Common myeloid progenitor, CD34-positive (primary cell): ENCODE measurements at regions of chr1 and their contacts with region 1.

Region 1: DNA sequence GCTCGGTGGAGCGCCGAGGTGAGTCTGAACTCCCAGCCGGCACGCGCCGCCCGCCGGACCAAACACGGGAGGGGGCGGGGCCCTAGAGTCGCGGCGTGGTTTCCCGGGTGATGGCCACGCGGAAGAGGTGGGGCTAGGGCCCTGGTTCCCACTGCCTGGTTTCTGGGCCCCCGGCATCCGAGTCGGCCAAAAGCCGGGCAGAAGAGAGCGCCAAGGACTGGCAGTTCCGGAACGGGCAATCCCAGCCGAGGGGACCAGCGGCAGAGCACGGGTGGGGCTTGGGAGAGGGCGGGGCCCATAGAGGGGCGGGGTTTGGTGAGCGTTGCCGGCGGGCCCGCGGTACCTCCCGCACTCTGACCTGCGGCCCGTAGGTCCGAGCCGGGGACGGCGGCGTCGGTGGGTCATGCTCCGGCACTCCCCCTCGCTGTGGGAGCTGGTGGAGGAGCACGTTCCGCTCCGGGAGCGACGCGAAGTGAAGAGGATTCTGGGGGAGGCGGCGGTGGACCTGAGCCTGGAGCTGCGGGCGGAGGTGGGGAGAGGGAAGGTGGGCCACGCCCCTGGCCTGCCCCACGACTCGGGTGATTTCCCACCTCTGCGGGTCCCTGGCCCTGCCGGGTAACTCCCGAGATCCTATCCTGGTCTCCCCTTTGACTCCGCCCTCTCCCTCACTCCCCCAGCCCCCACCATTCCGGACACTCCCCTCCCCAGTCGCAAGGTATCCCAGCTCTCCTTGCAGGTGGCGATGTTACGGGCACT is at the start of gene CCDC24:
- DNase-seq: peak; percentile 28 to 66 (median 51)
- H3K4me3 ChIP-seq: peak within 1 kb of the TSS; percentile 49 to 87 (median 72)
- H3K27ac ChIP-seq: peak within 1 kb of the TSS in 1 of 2 experiments; percentile 49
- H3K4me1 ChIP-seq: peaks cover 0 to 28% (median 28%) of the 10 kb centered on the region in 4 experiments
- H3K27me3 ChIP-seq: no peaks in the 10 kb centered on the region

Region 2: DNA sequence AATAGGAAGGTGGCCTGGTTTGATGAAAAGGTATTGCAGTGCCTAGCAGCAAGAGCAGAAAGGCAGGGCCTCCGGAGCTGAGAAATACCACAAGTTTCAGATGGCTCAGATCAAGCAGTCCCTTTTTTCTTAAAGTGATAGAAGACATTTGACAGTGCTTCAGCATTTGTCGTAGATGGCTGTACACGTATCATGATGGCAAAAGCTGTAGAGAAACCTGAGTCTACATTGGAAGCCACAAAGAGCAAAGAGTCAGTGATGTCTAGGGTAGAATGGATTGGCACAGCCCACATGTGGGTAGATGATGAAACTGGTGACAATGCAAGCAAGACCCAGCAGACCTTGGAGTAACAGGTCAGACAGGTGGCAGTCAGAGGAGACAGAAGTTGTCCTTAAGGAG is 159.4 kb before region 1 on chr1:
- CTCF ChIA-PET with region 1: no interaction called
- POLR2A ChIA-PET with region 1: no interaction called
- DNase-seq: no peak
- H3K4me3 ChIP-seq: no peak overlapping the region
- H3K27ac ChIP-seq: no peak overlapping the region
- H3K4me1 ChIP-seq: peaks cover 17 to 56% (median 43%) of the 10 kb centered on the region in 4 experiments
- H3K27me3 ChIP-seq: no peaks in the 10 kb centered on the region

Region 3: DNA sequence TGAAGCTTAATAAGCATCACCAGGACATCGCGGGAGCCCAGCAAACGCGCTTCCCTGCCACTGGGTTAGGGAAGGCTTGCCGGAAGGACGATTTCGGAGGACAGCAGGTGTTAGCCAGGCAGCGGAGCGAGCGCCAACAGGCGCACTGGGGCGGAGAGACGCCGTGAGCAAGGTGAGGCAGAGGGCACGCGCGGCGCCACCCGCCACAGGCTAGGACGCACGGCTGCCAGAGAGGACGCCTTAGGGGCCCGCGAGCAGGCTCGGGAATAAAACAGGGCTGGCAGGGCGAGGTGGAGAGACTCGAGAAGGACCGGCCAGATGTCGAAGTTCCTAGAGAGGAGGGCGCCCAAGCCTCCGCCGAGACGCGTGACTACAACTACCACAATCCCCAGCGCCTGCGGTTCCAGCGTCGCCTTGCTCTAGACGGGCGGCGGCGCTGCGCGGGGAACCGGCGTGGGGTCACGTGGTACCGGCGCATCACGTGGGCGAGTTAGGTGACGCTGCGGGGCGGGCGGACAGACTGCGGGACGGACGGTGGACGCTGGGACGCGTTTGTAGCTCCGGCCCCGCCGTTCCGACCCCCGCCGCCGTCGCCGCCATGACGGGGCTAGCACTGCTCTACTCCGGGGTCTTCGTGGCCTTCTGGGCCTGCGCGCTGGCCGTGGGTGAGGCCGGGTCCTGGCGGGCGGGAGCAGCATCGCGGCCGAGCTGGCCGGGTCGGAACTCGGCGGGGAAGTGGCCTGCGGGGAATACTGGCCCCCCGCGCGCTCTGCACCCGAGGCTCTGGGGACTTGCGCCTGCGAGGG is 17.0 kb before region 1 on chr1 and contains the start of gene ATP6V0B:
- CTCF ChIA-PET with region 1: interaction called, 13 read pairs
- POLR2A ChIA-PET with region 1: interaction called, 3 read pairs
- DNase-seq: peak; percentile 91 to 95 (median 94)
- H3K4me3 ChIP-seq: peak within 1 kb of the TSS; percentile 57 to 95 (median 88)
- H3K27ac ChIP-seq: peak within 1 kb of the TSS; percentile 64 to 90
- H3K4me1 ChIP-seq: peaks cover 7 to 56% (median 43%) of the 10 kb centered on the region in 4 experiments
- H3K27me3 ChIP-seq: no peaks in the 10 kb centered on the region

Region 4: DNA sequence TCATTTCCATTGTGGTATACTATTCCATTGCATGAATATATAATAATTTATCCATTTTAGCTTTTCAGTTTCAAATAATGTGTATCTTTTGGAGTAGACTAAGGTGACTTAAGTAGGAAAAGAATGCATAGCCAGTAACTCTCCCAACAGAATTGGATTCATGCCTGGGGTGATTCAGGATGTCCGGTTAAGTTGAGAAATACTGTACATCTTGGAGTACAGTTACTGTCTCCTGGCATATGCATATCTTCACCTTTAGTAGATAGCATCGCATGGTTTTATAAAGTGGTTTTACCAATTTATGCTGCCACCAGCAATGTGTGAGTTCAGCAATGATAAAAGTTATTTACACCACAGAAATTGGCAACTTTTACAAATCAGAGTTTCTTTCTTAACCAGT is 58.2 kb after region 1 on chr1:
- CTCF ChIA-PET with region 1: interaction called, 11 read pairs
- POLR2A ChIA-PET with region 1: no interaction called
- DNase-seq: no peak
- H3K4me3 ChIP-seq: no peak overlapping the region
- H3K27ac ChIP-seq: no peak overlapping the region
- H3K4me1 ChIP-seq: peaks cover 5 to 29% (median 20%) of the 10 kb centered on the region in 4 experiments
- H3K27me3 ChIP-seq: no peaks in the 10 kb centered on the region